ENCODE measurements at regions of chr2 and their contacts with region 1.

Region 1: GRCh38 chr2:12931186-12931844 is 214.6 kb downstream of the TRIB2 start:
- DNase-seq: peak in 1 of 10 donors; percentile 11

Region 2: DNA sequence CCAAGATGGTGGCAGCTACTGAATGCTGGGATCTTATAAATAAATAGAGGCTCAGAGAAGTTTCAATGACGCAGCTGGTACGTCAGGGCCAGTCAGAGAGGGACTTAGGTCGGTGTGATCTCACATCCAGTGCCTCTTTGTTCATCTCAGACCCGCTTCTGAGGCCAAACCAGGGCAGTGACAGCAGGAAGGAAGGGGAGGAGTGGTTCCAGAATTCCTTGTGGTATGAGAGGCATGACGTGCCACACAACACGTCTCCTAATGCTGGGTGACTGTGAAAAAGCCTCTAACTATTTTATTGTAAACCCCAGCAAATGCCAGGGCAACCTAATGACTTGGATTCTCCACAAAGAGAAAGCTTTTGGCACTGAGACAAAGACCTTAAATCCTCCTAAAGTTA is 761.6 kb before region 1 on chr2:
- intact Hi-C with region 1: loop called (anchors 1 kb)
- DNase-seq: peak in 1 of 10 donors; percentile 13

Measured in posterior cingulate gyrus (tissue), 11 donors.